WTC11 (cell line): ENCODE measurements at regions of chr12 and their contacts with region 1.

Region 1: GRCh38 chr12:120457133-120457532 is 10.9 kb downstream of the GATC start:
- DNase-seq: peak; percentile 30
- ATAC-seq: peak; percentile 77
- H3K4me3 Mint-ChIP-seq: no peak overlapping the region
- H3K27ac Mint-ChIP-seq: no peak overlapping the region
- H3K4me1 Mint-ChIP-seq: no peaks in the 10 kb centered on the region
- H3K27me3 Mint-ChIP-seq: no peaks in the 10 kb centered on the region
- CTCF ChIP-seq: 0 out of 2 replicates have a peak, but pooled peaks have one; percentile 15

Region 2: DNA sequence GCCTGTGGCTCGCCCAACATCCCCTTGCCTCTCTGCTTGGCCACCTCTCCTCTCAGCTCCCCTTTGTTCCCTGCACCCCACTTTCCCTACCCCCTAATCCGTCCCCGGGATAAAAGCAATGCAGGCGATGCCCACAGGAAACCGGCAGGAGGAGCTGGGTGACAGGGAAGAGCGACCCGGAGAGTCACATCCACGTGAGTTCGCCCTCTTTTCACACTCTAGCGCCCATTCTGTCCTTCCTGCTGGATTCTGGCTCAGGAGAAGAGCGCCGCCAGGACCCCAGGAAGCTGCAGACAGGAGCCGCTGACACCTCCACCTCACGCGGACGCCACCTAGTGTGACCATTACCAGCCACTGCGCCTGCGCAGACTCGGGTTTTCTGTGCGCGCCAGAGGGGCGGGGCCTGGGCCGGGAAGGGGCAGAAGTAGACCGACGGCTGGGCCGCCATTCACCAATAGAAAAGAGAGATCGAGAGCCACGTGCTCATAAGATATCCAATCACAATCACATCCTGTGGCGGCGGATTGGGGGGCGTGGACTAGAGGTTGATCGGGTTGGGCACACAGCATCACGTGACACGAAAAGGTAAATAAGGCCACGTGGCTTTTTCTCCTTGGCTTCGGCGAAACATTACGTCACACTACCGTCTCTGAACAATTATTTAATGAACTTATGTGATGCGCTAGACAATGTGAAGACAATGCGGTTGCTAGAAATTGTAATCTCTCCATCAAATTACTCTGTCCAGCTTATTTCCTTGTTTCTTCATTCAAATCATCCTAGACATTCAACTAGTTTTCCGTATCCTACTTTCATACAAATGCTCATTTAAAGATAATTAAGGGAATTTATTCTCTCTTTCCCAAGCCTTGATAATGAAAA is 139.7 kb before region 1 on chr12:
- CTCF ChIA-PET with region 1: interaction called, 12 read pairs
- POLR2A ChIA-PET with region 1: no interaction called
- DNase-seq: peak; percentile 100
- ATAC-seq: peak; percentile 98
- H3K4me3 Mint-ChIP-seq: peak overlapping the region; percentile 80
- H3K27ac Mint-ChIP-seq: peak overlapping the region; percentile 68
- H3K4me1 Mint-ChIP-seq: peaks cover 11% of the 10 kb centered on the region
- H3K27me3 Mint-ChIP-seq: peaks cover 5% of the 10 kb centered on the region
- CTCF ChIP-seq: no peak

Region 3: DNA sequence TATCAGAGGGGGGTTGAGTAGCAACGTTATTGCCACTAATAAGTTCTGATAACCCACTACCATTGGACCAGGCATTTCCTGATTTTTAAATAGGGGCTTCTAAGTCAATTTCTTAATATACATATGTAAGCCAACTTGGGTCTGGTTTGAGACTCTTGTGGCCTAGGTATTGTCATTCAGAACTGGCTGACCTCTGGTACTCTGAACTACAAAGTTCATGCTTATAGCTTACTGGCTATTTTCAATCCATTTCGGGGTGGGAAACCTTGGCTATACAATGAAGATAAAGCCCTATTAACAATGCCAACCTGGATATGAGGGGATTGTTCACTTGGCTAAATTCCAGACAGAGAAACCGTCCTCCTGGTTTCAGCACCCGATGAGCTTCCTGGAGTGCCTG is 47.5 kb after region 1 on chr12:
- CTCF ChIA-PET with region 1: interaction called, 11 read pairs
- POLR2A ChIA-PET with region 1: no interaction called
- DNase-seq: no peak
- ATAC-seq: peak; percentile 76
- H3K4me3 Mint-ChIP-seq: peak overlapping the region; percentile 20; the same call in 1 of the 2 replicates
- H3K27ac Mint-ChIP-seq: peak overlapping the region; percentile 78
- H3K4me1 Mint-ChIP-seq: peaks cover 17% of the 10 kb centered on the region
- H3K27me3 Mint-ChIP-seq: no peaks in the 10 kb centered on the region
- CTCF ChIP-seq: no peak

Region 4: DNA sequence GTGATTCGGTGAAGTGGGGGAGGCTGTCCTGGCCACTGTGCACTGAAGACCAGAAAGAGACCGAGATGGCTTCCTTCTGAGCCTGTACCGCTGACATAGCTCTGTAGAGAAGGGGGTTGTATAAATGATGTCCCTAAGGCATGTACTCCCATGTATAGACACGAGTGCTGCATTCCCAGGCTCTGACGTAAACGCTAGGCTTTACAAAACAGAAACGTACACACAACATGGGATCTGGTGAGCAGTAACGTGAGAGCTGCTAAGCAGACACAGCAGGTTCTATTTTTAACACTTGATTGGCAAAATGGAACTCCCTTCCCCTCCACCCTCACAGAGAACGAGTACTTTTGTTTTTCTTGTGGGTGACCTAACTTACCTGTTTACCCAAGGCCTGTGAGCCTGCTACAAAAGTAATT is 304.4 kb after region 1 on chr12:
- CTCF ChIA-PET with region 1: no interaction called
- POLR2A ChIA-PET with region 1: no interaction called
- DNase-seq: no peak
- ATAC-seq: no peak
- H3K4me3 Mint-ChIP-seq: no peak overlapping the region
- H3K27ac Mint-ChIP-seq: 0 out of 2 replicates have a peak overlapping the region, but pooled peaks have one; percentile 86
- H3K4me1 Mint-ChIP-seq: peaks cover 18% of the 10 kb centered on the region
- H3K27me3 Mint-ChIP-seq: no peaks in the 10 kb centered on the region
- CTCF ChIP-seq: no peak